Transverse colon (tissue), 4 donors: ENCODE measurements at regions of chr18 and their contacts with region 1.

Region 1: GRCh38 chr18:78330761-78331160 is 648.9 kb upstream of the SALL3 start:
- DNase-seq: no peak
- H3K4me3 ChIP-seq: no peak overlapping the region
- H3K27ac ChIP-seq: no peak overlapping the region
- H3K4me1 ChIP-seq: no peaks in the 10 kb centered on the region
- H3K27me3 ChIP-seq: no peaks in the 10 kb centered on the region
- CTCF ChIP-seq: no peak
- EP300 ChIP-seq: no peak
- POLR2A ChIP-seq: no peak

Region 2: GRCh38 chr18:78123144-78123909 is 207.4 kb before region 1 on chr18:
- in situ Hi-C with region 1: no loop called
- intact Hi-C with region 1: no loop called
- DNase-seq: no peak
- H3K4me3 ChIP-seq: no peak overlapping the region
- H3K27ac ChIP-seq: no peak overlapping the region
- H3K4me1 ChIP-seq: no peaks in the 10 kb centered on the region
- H3K27me3 ChIP-seq: no peaks in the 10 kb centered on the region
- CTCF ChIP-seq: no peak
- EP300 ChIP-seq: no peak
- POLR2A ChIP-seq: no peak

Region 3: DNA sequence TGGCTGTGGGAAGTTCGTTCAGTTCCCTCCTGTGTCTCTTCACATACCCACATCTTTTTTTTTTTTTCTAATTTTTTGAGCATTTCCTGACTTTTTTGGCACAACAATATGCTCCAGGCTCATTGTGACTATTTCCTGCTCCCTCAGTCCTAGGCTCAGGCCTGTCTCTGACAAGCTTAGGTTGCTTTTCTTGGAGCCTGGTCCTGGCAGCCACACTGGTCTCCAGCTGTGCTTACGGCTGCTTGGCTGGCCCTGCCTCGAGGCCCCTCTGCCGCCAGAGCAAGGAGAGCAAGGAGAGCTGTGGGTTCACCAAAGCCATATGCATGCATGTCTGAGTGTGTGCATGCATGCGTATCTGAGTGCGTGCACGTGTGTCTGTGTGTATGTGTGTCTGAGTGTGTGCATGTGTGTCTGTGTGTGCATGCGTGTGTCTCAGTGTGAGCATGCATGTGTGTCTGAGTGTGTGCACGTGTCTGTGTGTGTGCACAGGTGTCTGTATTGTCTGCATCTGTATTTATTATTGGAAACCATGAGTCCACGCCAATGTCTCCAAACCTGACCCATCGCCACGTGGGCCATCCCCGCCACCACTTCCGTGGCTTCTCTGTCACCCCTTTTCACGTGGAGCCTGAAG is 117.3 kb before region 1 on chr18:
- in situ Hi-C with region 1: no loop called
- intact Hi-C with region 1: loop called (anchors 10 kb)
- DNase-seq: no peak
- H3K4me3 ChIP-seq: no peak overlapping the region
- H3K27ac ChIP-seq: no peak overlapping the region
- H3K4me1 ChIP-seq: no peaks in the 10 kb centered on the region
- H3K27me3 ChIP-seq: no peaks in the 10 kb centered on the region
- CTCF ChIP-seq: no peak
- EP300 ChIP-seq: no peak
- POLR2A ChIP-seq: no peak

Region 4: GRCh38 chr18:78390348-78390929 is 59.7 kb after region 1 on chr18:
- in situ Hi-C with region 1: loop called in 1 of 4 experiments (anchors 10 kb)
- intact Hi-C with region 1: no loop called
- DNase-seq: no peak
- H3K4me3 ChIP-seq: no peak overlapping the region
- H3K27ac ChIP-seq: no peak overlapping the region
- H3K4me1 ChIP-seq: no peaks in the 10 kb centered on the region
- H3K27me3 ChIP-seq: no peaks in the 10 kb centered on the region
- CTCF ChIP-seq: no peak
- EP300 ChIP-seq: no peak
- POLR2A ChIP-seq: no peak

Region 5: DNA sequence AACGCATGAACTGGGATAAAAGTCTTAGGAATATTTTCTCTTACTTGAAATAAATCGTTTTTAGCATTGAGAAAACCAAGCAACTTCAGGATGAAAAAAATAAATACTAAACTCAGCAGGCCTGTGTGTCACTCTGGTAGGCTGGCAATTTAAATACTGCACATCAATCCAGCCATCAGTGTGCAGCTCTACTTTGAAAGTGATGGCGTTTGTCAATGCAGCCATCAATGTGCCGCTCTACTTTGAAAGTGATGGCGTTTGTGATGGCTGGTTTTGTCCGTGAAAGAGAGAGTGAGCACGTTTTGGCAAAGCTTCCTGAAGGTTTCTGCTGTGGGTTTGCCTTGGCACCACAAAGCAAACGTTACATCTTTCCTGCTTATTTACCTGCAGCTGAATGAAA is 105.3 kb after region 1 on chr18:
- in situ Hi-C with region 1: no loop called
- intact Hi-C with region 1: no loop called
- DNase-seq: no peak
- H3K4me3 ChIP-seq: no peak overlapping the region
- H3K27ac ChIP-seq: no peak overlapping the region
- H3K4me1 ChIP-seq: no peaks in the 10 kb centered on the region
- H3K27me3 ChIP-seq: no peaks in the 10 kb centered on the region
- CTCF ChIP-seq: no peak
- EP300 ChIP-seq: no peak
- POLR2A ChIP-seq: no peak